PC-9 (cell line): ENCODE measurements at regions of chr2 and their contacts with region 1.

Region 1: GRCh38 chr2:46776687-46777327 is 138.8 kb downstream of the MCFD2 start:
- DNase-seq: peak; percentile 34 to 51
- H3K4me3 ChIP-seq: no peak overlapping the region
- H3K27ac ChIP-seq: no peak overlapping the region
- H3K4me1 ChIP-seq: peaks cover 9% of the 10 kb centered on the region
- H3K27me3 ChIP-seq: no peaks in the 10 kb centered on the region
- CTCF ChIP-seq: peak; percentile 85

Region 2: DNA sequence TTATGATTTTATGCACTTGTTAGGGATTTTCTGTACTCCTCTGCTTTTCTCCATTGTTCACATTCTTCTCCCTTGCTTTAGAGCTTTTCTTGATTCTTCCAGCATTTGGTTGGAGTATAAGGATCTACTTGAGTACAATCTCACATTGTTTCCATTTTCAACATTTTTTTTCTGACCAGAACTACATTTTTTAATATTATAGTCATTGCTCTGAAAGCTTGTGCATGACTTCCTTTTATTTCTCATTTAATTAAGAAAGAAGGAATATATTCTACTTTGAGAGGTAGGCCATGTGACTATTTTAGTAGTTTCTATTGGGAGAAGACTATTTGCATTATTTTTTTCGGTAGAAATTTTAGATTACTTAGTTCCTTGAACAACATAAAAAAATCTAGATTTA is 97.0 kb before region 1 on chr2:
- CTCF ChIA-PET with region 1: no interaction called
- POLR2A ChIA-PET with region 1: no interaction called
- intact Hi-C with region 1: no loop called
- DNase-seq: no peak
- H3K4me3 ChIP-seq: no peak overlapping the region
- H3K27ac ChIP-seq: no peak overlapping the region
- H3K4me1 ChIP-seq: no peaks in the 10 kb centered on the region
- H3K27me3 ChIP-seq: no peaks in the 10 kb centered on the region
- CTCF ChIP-seq: no peak

Region 3: GRCh38 chr2:46722142-46722541 is 54.7 kb before region 1 on chr2:
- CTCF ChIA-PET with region 1: no interaction called
- POLR2A ChIA-PET with region 1: no interaction called
- intact Hi-C with region 1: no loop called
- DNase-seq: no peak
- H3K4me3 ChIP-seq: no peak overlapping the region
- H3K27ac ChIP-seq: no peak overlapping the region
- H3K4me1 ChIP-seq: peaks cover 16% of the 10 kb centered on the region; the same call in 1 of the 2 replicates
- H3K27me3 ChIP-seq: no peaks in the 10 kb centered on the region
- CTCF ChIP-seq: no peak

Region 4: GRCh38 chr2:46735108-46735691 is 41.6 kb before region 1 on chr2:
- CTCF ChIA-PET with region 1: no interaction called
- POLR2A ChIA-PET with region 1: no interaction called
- intact Hi-C with region 1: no loop called
- DNase-seq: no peak
- H3K4me3 ChIP-seq: no peak overlapping the region
- H3K27ac ChIP-seq: no peak overlapping the region
- H3K4me1 ChIP-seq: peaks cover 17% of the 10 kb centered on the region
- H3K27me3 ChIP-seq: no peaks in the 10 kb centered on the region
- CTCF ChIP-seq: no peak

Region 5: GRCh38 chr2:46876741-46877384 is 100.1 kb after region 1 on chr2:
- CTCF ChIA-PET with region 1: interaction called, 3 read pairs
- POLR2A ChIA-PET with region 1: no interaction called
- intact Hi-C with region 1: loop called (anchors 5 kb)
- DNase-seq: peak; percentile 46 to 75
- H3K4me3 ChIP-seq: no peak overlapping the region
- H3K27ac ChIP-seq: no peak overlapping the region
- H3K4me1 ChIP-seq: peaks cover 17% of the 10 kb centered on the region
- H3K27me3 ChIP-seq: no peaks in the 10 kb centered on the region
- CTCF ChIP-seq: peak; percentile 75